GM12878 (cell line): ENCODE measurements at regions of chr5 and their contacts with region 1.

Region 1: GRCh38 chr5:157219491-157220271 is 39.0 kb downstream of the ITK start:
- DNase-seq: peak; percentile 50
- ATAC-seq: peak; percentile 75
- H3K4me3 ChIP-seq: no peak overlapping the region
- H3K27ac ChIP-seq: peak overlapping the region; percentile 54
- H3K4me1 ChIP-seq: peaks cover 53% of the 10 kb centered on the region
- H3K27me3 ChIP-seq: no peaks in the 10 kb centered on the region
- CTCF ChIP-seq: no peak
- EP300 ChIP-seq: peak; percentile 27 to 78; a peak in 2 of 4 replicates
- POLR2A ChIP-seq: no peak
- RAD21 ChIP-seq: 0 out of 2 replicates have a peak, but pooled peaks have one; percentile 12

Region 2: GRCh38 chr5:157049605-157050004 is 170.1 kb before region 1 on chr5:
- CTCF ChIA-PET with region 1: no interaction called
- POLR2A ChIA-PET with region 1: no interaction called
- RAD21 ChIA-PET with region 1: no interaction called
- SMC1A ChIA-PET with region 1: no interaction called
- in situ Hi-C with region 1: no loop called
- intact Hi-C with region 1: no loop called
- DNase-seq: no peak
- ATAC-seq: no peak
- H3K4me3 ChIP-seq: no peak overlapping the region
- H3K27ac ChIP-seq: no peak overlapping the region
- H3K4me1 ChIP-seq: no peaks in the 10 kb centered on the region
- H3K27me3 ChIP-seq: no peaks in the 10 kb centered on the region; a peak in 1 of 4 replicates
- CTCF ChIP-seq: no peak
- EP300 ChIP-seq: no peak
- POLR2A ChIP-seq: no peak
- RAD21 ChIP-seq: no peak

Region 3: GRCh38 chr5:157157293-157157891 is 62.3 kb before region 1 on chr5:
- CTCF ChIA-PET with region 1: interaction called, 5 read pairs
- POLR2A ChIA-PET with region 1: interaction called, 4 read pairs
- RAD21 ChIA-PET with region 1: interaction called, 4 read pairs
- SMC1A ChIA-PET with region 1: interaction called, 22 read pairs
- in situ Hi-C with region 1: no loop called
- intact Hi-C with region 1: no loop called
- DNase-seq: no peak
- ATAC-seq: no peak
- H3K4me3 ChIP-seq: no peak overlapping the region
- H3K27ac ChIP-seq: no peak overlapping the region
- H3K4me1 ChIP-seq: no peaks in the 10 kb centered on the region
- H3K27me3 ChIP-seq: no peaks in the 10 kb centered on the region
- CTCF ChIP-seq: no peak
- EP300 ChIP-seq: no peak
- POLR2A ChIP-seq: no peak
- RAD21 ChIP-seq: no peak

Region 4: GRCh38 chr5:157172403-157172802 is 47.3 kb before region 1 on chr5:
- CTCF ChIA-PET with region 1: interaction called, 8 read pairs
- POLR2A ChIA-PET with region 1: interaction called, 20 read pairs
- RAD21 ChIA-PET with region 1: interaction called, 30 read pairs
- SMC1A ChIA-PET with region 1: interaction called, 29 read pairs
- in situ Hi-C with region 1: no loop called
- intact Hi-C with region 1: loop called (anchors 1 kb)
- DNase-seq: peak; percentile 98
- ATAC-seq: peak; percentile 98
- H3K4me3 ChIP-seq: no peak overlapping the region
- H3K27ac ChIP-seq: peak overlapping the region; percentile 93
- H3K4me1 ChIP-seq: peaks cover 14% of the 10 kb centered on the region
- H3K27me3 ChIP-seq: no peaks in the 10 kb centered on the region
- CTCF ChIP-seq: no peak
- EP300 ChIP-seq: peak; percentile 88 to 94; a peak in 3 of 4 replicates
- POLR2A ChIP-seq: no peak
- RAD21 ChIP-seq: 0 out of 2 replicates have a peak, but pooled peaks have one; percentile 30

Region 5: DNA sequence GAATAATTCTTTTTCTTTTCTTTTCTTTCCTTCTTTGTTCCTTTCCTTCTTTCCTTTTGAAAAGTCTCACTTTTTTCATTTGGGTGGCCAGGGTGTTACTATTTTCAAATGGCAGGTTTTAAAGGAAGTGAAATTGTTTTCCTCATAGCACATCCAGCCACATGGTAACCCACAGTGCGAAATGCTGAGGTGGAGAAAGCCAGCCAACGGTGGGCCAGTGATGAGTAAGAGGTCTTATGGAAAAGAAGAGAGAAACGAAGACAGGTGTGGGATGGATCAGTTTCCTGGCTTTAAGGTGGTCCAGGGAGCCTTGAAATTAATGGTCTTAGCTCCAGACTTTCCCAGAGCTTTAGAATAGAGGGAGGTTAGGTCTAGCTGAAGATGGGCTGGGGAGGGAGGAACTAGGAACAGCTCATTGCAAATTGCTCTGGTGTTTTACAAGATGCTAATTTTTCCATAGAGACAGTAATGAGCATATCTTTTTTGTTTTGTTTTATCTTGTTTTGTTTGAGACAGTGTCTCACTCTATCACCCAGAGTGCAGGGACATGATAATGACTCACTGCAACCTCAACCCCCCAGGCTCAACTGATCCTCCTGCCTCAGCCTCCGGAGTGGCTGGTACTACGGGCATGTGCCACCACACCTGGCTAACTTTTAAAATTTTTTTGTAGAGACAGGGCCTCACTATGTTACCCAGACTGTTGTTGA is 21.2 kb before region 1 on chr5:
- CTCF ChIA-PET with region 1: interaction called, 4 read pairs
- POLR2A ChIA-PET with region 1: interaction called, 6 read pairs
- RAD21 ChIA-PET with region 1: interaction called, 5 read pairs
- SMC1A ChIA-PET with region 1: interaction called, 12 read pairs
- in situ Hi-C with region 1: no loop called
- intact Hi-C with region 1: no loop called
- DNase-seq: no peak
- ATAC-seq: peak; percentile 67
- H3K4me3 ChIP-seq: no peak overlapping the region
- H3K27ac ChIP-seq: no peak overlapping the region
- H3K4me1 ChIP-seq: no peaks in the 10 kb centered on the region
- H3K27me3 ChIP-seq: no peaks in the 10 kb centered on the region
- CTCF ChIP-seq: no peak
- EP300 ChIP-seq: no peak
- POLR2A ChIP-seq: no peak
- RAD21 ChIP-seq: no peak

Region 6: DNA sequence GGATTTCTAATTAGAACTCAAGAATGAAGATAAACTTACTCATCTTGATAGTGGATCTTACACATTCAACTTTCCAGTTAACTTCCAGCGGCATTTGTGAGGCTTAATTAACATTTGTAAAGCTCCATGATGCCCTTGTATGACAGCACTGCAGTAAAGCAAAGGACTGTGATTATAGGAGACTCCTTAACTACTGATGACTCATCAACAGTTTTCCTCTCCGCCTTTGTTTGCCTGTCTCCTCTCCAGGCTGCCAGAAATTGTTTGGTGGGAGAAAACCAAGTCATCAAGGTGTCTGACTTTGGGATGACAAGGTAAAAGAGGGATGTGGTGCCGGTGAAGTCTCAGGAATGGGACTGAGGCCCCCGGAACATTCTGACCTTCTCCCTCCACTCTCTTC is 25.8 kb after region 1 on chr5:
- CTCF ChIA-PET with region 1: interaction called, 11 read pairs
- POLR2A ChIA-PET with region 1: interaction called, 6 read pairs
- RAD21 ChIA-PET with region 1: interaction called, 16 read pairs
- SMC1A ChIA-PET with region 1: interaction called, 7 read pairs
- in situ Hi-C with region 1: no loop called
- intact Hi-C with region 1: no loop called
- DNase-seq: no peak
- ATAC-seq: no peak
- H3K4me3 ChIP-seq: no peak overlapping the region
- H3K27ac ChIP-seq: no peak overlapping the region
- H3K4me1 ChIP-seq: no peaks in the 10 kb centered on the region
- H3K27me3 ChIP-seq: no peaks in the 10 kb centered on the region
- CTCF ChIP-seq: no peak
- EP300 ChIP-seq: no peak
- POLR2A ChIP-seq: no peak
- RAD21 ChIP-seq: no peak

Region 7: DNA sequence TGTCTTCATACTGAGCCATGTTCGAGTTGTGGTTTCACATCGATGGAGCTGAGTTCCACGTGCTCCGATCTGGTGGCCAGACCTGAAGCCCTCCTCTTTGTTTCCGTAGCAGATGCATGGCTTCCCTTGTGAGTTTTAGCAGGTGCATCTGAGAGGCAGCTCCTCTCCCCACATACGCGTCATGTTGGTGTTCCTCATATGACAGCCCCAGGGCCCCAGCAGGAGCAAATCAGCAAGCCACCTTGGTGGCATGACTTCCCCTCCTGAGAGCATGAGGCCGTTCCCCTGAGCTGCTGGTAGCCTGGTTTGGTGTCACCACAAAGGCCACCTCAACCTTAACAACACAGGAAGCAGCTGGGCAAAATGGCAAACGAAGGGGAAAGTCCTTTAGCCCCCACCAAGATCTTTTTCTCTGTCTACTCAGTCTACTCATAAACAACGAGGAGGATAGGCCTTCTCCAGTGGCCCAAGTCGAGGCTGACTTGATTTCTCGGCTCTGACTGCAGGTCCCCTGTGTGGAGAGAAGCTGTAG is 52.1 kb after region 1 on chr5:
- CTCF ChIA-PET with region 1: interaction called, 6 read pairs
- POLR2A ChIA-PET with region 1: interaction called, 7 read pairs
- RAD21 ChIA-PET with region 1: interaction called, 24 read pairs
- SMC1A ChIA-PET with region 1: interaction called, 8 read pairs
- in situ Hi-C with region 1: no loop called
- intact Hi-C with region 1: no loop called
- DNase-seq: peak; percentile 93
- ATAC-seq: peak; percentile 80
- H3K4me3 ChIP-seq: peak overlapping the region; percentile 60; the same call in 1 of the 2 replicates
- H3K27ac ChIP-seq: peak overlapping the region; percentile 97
- H3K4me1 ChIP-seq: peaks cover 56% of the 10 kb centered on the region
- H3K27me3 ChIP-seq: no peaks in the 10 kb centered on the region
- CTCF ChIP-seq: no peak
- EP300 ChIP-seq: peak; percentile 72 to 75; a peak in 3 of 4 replicates
- POLR2A ChIP-seq: peak; percentile 82
- RAD21 ChIP-seq: no peak